Posterior vena cava (tissue), 2 donors: ENCODE measurements at regions of chr12 and their contacts with region 1.

Region 1: GRCh38 chr12:47990351-47991105 is 13.7 kb downstream of the COL2A1 start:
- DNase-seq: peak; percentile 14

Region 2: GRCh38 chr12:47178014-47178413 is 812.5 kb before region 1 on chr12:
- intact Hi-C with region 1: loop called in 1 of 2 experiments (anchors 5 kb)
- DNase-seq: no peak

Region 3: GRCh38 chr12:47636908-47637780 is 353.4 kb before region 1 on chr12:
- intact Hi-C with region 1: no loop called
- DNase-seq: no peak

Region 4: GRCh38 chr12:48165094-48165981 is 174.8 kb after region 1 on chr12:
- intact Hi-C with region 1: loop called in 1 of 2 experiments (anchors 2 kb)
- DNase-seq: no peak

Region 5: GRCh38 chr12:49219417-49220026 is 1229.0 kb after region 1 on chr12:
- intact Hi-C with region 1: no loop called
- DNase-seq: no peak